Thyroid gland (tissue), 4 donors: ENCODE measurements at regions of chr5 and their contacts with region 1.

Region 1: DNA sequence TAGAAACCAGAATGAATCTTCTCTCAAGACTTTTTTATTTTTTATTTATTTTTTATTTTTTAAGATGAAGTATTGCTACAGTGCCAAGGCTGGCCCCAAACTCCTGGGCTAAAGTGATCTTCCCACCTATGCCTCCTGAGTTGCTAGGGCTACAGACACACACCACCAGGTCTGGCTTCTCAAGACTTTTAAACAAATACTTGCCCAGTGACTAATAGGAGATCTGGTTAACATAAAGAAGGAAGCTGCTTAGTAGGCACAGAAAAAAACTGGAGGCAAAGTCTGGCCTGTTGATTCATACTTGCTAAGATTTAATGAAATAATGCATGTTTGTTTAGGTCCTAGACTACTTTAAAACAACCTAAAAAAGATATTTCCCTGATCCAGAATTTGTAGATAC is 43.8 kb downstream of the SLC38A9 start:
- DNase-seq: peak in 1 of 2 donors; percentile 7
- H3K4me3 ChIP-seq: no peak overlapping the region
- H3K27ac ChIP-seq: no peak overlapping the region
- H3K4me1 ChIP-seq: no peaks in the 10 kb centered on the region
- H3K27me3 ChIP-seq: no peaks in the 10 kb centered on the region
- CTCF ChIP-seq: no peak
- POLR2A ChIP-seq: no peak

Region 2: GRCh38 chr5:55497712-55498111 is 170.6 kb before region 1 on chr5:
- intact Hi-C with region 1: no loop called
- DNase-seq: no peak
- H3K4me3 ChIP-seq: no peak overlapping the region
- H3K27ac ChIP-seq: no peak overlapping the region
- H3K4me1 ChIP-seq: peaks cover 0 to 5% of the 10 kb centered on the region in 2 donors
- H3K27me3 ChIP-seq: no peaks in the 10 kb centered on the region
- CTCF ChIP-seq: no peak
- POLR2A ChIP-seq: no peak

Region 3: DNA sequence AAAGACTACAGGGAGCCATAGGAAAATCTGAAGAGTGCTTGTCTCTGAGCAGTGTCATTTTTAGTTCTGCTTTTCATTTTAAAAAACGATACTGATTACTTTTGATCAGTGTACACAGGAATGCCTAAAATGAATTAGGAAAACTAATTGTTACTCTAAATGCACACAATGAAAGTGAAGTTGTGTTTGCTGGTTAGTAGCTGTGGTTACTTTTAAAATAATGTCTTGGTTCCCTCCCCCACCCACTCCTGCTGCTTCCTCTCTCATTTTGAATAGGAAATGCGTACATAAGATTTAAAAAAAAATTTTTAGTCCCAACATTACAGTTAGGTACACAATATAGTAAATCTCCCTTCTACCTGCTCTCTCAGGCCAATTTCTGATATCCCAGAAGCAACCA is 86.1 kb before region 1 on chr5:
- intact Hi-C with region 1: no loop called
- DNase-seq: no peak
- H3K4me3 ChIP-seq: no peak overlapping the region
- H3K27ac ChIP-seq: no peak overlapping the region
- H3K4me1 ChIP-seq: peaks cover 0 to 11% of the 10 kb centered on the region in 2 donors
- H3K27me3 ChIP-seq: no peaks in the 10 kb centered on the region
- CTCF ChIP-seq: no peak
- POLR2A ChIP-seq: no peak

Region 4: GRCh38 chr5:55601204-55601618 is 67.1 kb before region 1 on chr5:
- intact Hi-C with region 1: loop called (anchors 10 kb)
- DNase-seq: peak; percentile 54 to 67
- H3K4me3 ChIP-seq: no peak overlapping the region
- H3K27ac ChIP-seq: peak overlapping the region; percentile 71 to 87 (median 72)
- H3K4me1 ChIP-seq: peaks cover 14 to 57% of the 10 kb centered on the region in 2 donors
- H3K27me3 ChIP-seq: no peaks in the 10 kb centered on the region
- CTCF ChIP-seq: no peak
- POLR2A ChIP-seq: no peak

Region 5: DNA sequence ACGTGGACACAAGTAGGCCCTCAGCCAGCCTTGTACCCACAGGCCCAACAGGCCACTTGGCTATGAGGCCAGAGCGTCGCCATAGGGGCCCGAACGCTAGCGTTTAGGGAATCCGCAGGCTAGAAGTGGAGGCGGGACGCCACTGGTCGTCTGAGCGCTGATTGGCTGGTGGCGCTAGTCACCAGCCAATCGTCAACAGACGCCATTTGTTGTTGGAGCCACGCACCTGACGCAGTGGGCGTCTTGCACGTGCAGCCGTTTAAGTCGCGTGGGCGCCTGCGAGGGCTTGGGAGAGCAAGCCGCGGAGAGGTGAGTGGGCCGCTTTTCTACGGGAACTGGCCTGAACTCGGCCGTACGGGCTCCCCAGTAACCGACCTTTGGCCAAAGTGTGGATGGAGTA is 69.4 kb after region 1 on chr5 and contains the start of gene DDX4:
- intact Hi-C with region 1: no loop called
- DNase-seq: no peak
- H3K4me3 ChIP-seq: no peak within 1 kb of the TSS
- H3K27ac ChIP-seq: no peak within 1 kb of the TSS
- H3K4me1 ChIP-seq: no peaks in the 10 kb centered on the region
- H3K27me3 ChIP-seq: no peaks in the 10 kb centered on the region
- CTCF ChIP-seq: no peak
- POLR2A ChIP-seq: no peak
- total RNA-seq, gene DDX4: 0.27 to 0.33 TPM in 2 of 4 donors, not detected in the others

Region 6: DNA sequence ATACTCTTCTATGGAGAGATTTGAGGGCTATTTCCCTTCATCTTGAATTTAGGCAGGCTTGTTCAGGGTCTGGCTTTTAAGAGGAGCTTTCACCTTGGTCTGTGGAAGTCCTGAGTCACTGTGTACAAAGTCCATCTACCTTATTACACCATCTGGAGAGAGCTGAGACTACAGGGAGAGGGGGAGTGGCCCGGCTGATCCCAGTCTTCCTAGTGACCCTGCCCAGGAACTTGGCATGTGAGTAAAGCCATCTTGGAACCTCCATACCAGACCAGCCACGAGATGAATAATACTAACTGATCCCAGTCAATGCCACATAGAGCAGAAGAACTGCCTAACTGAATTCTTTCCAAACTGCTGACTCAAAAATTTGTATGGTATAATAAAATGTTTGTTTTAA is 334.8 kb after region 1 on chr5:
- intact Hi-C with region 1: no loop called
- DNase-seq: no peak
- H3K4me3 ChIP-seq: no peak overlapping the region
- H3K27ac ChIP-seq: no peak overlapping the region
- H3K4me1 ChIP-seq: no peaks in the 10 kb centered on the region
- H3K27me3 ChIP-seq: no peaks in the 10 kb centered on the region
- CTCF ChIP-seq: no peak
- POLR2A ChIP-seq: no peak